OCI-LY7 (cell line): ENCODE measurements at regions of chr9 and their contacts with region 1.

Region 1: DNA sequence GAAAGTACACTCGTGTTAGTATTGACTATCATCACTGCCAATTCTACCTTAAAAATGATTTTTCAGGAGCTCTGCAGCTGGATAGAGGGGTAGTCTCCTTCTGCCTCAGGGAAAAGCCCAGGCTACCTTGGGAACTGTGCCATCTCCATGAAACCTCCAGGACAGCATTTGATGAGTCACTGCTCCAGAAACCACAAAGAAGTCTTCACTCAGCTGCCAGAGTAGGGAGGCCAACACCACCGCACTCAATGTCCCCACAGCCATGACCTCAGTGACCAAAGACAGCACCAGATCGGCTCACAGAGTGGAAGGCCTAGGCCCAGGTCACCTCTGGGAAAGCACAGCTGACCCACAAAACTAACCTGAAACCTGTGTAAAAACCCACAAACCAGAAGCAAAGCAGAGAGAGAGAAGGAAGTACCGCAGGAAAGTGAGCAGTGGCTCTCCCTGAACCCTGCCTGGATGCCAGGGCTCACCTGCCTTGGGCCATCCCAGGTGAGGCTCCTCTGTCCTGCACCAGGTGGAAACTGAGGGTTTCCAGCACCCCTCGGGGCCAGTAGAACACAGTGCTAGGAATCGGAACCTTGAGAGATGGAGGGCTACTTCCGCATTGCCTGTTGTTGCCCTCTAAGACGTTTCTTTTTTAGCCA is 30.0 kb downstream of the S1PR3 start:
- DNase-seq: no peak
- H3K4me3 ChIP-seq: no peak overlapping the region
- H3K27ac ChIP-seq: no peak overlapping the region
- H3K4me1 ChIP-seq: no peaks in the 10 kb centered on the region
- CTCF ChIP-seq: no peak

Region 2: DNA sequence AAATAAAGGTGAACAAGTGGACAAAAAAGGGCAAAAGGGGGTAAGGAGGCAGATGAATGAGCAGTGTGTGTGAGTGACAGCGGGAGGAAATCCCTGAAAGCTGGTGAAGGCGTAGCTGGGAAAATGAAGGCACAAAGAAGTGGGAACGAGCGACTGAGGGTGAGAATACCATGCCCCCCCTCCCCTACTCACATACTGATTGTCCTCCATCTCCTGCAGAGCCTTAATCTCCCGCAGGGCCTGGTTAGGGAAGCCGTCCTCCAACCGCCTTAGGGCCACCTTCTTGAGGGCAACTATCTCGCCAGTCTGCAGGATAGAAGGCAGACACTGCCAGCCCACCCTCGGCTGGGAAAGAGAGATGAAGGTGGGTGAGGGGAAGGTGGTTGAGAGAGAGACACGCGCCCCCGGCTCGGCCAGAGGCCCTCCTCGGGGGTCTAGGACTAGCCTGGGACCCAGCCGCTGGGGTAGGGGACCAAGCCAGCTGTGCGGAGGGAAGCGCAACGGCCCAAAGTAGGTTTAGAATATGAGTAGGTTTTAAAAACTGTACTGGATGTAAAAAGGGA is 1047.5 kb before region 1 on chr9:
- CTCF ChIA-PET with region 1: no interaction called
- POLR2A ChIA-PET with region 1: no interaction called
- intact Hi-C with region 1: loop called (anchors 10 kb)
- DNase-seq: no peak
- H3K4me3 ChIP-seq: no peak overlapping the region
- H3K27ac ChIP-seq: no peak overlapping the region
- H3K4me1 ChIP-seq: no peaks in the 10 kb centered on the region
- CTCF ChIP-seq: no peak

Region 3: GRCh38 chr9:89508951-89509615 is 487.8 kb after region 1 on chr9:
- CTCF ChIA-PET with region 1: no interaction called
- POLR2A ChIA-PET with region 1: no interaction called
- intact Hi-C with region 1: no loop called
- DNase-seq: no peak
- H3K4me3 ChIP-seq: no peak overlapping the region
- H3K27ac ChIP-seq: peak overlapping the region; percentile 76
- H3K4me1 ChIP-seq: peaks cover 59% of the 10 kb centered on the region
- CTCF ChIP-seq: no peak